AG04449 (cell line): ENCODE measurements at regions of chr14 and their contacts with region 1.

Region 1: DNA sequence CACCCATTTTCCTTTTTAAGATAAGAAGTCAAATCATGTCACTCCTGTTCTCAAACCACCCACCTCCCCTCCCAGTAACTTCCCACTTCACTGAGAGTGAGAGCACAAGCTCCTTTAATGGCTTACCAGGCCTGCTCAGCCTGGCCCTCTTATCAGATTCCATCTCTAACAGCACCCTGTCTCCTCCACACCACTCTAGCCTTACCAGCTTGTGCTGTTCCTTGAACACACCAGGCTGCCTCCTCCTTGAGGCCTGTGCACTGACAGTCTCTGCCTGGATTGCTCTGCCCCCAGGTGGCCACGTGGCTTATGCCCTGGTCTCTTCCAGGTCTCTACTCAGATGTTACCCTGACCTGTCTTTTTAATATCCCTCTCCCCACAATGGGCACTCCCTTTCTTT is 40.1 kb upstream of the EVL start:
- DNase-seq: no peak
- H3K4me3 ChIP-seq: no peak overlapping the region
- CTCF ChIP-seq: peak; percentile 55

Region 2: DNA sequence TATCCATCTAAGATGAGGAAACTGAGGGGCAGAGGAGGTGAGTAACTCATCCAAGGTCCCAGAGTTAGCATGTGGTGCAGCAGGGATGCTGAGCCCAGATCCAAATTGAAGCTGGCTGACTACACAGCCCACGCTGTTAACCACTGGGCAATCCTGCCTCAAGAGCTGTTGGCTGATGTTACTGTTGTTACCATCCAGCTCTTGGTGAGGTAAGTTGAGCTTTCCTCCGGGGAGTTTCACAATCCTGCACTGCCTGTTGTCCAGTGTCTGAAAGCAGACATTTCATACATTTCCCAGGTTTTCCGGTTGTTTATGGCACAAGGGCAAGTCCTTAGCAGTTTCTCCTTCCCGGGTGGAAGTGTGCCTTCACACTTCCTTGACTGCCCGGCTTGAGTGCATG is 326.5 kb before region 1 on chr14:
- CTCF ChIA-PET with region 1: no interaction called
- POLR2A ChIA-PET with region 1: no interaction called
- DNase-seq: no peak
- H3K4me3 ChIP-seq: no peak overlapping the region
- CTCF ChIP-seq: no peak

Region 3: GRCh38 chr14:100012402-100013327 is 12.4 kb before region 1 on chr14:
- CTCF ChIA-PET with region 1: interaction called, 13 read pairs
- POLR2A ChIA-PET with region 1: no interaction called
- DNase-seq: no peak
- H3K4me3 ChIP-seq: no peak overlapping the region
- CTCF ChIP-seq: no peak

Region 4: GRCh38 chr14:100726550-100727085 is 701.5 kb after region 1 on chr14 and contains the start of gene DLK1:
- CTCF ChIA-PET with region 1: no interaction called
- POLR2A ChIA-PET with region 1: no interaction called
- DNase-seq: no peak
- H3K4me3 ChIP-seq: no peak within 1 kb of the TSS
- CTCF ChIP-seq: no peak

Region 5: DNA sequence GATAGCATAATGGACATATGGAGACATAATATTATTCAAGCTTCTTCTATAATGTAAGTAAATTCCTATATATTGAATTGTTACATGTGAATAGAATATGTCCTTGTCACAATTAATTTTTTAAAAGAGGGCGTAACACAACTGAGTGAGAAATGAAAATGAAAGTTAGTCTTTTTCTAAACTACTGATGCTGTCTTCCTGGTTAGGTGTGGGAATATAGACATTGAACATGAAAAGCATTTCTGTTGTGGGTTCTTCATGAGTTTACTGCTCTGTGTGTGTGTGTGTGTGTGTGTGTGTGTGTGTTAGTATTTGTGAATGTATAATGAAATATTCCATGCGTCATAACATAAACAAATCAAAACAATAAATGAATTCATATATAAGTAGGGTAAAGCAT is 918.9 kb after region 1 on chr14:
- CTCF ChIA-PET with region 1: no interaction called
- POLR2A ChIA-PET with region 1: no interaction called
- DNase-seq: no peak
- H3K4me3 ChIP-seq: no peak overlapping the region
- CTCF ChIP-seq: no peak